Naive thymus-derived CD4-positive, alpha-beta T cell (primary cell): ENCODE measurements at regions of chr3 and their contacts with region 1.

Region 1: GRCh38 chr3:101544161-101544850 is 17.4 kb upstream of the TRMT10C start:
- DNase-seq: peak in 1 of 9 donors; percentile 10
- ATAC-seq: no peak
- H3K4me3 ChIP-seq: no peak overlapping the region
- H3K4me3 Mint-ChIP-seq: peak overlapping the region in 9 of 10 donors; percentile 1 to 77 (median 36)
- H3K27ac ChIP-seq: peak overlapping the region; percentile 20
- H3K27ac Mint-ChIP-seq: peak overlapping the region; percentile 51 to 95 (median 89)
- H3K4me1 ChIP-seq: peaks cover 20 to 25% of the 10 kb centered on the region in 2 donors
- H3K4me1 Mint-ChIP-seq: peaks cover 17 to 40% (median 31%) of the 10 kb centered on the region in 7 donors
- H3K27me3 ChIP-seq: no peaks in the 10 kb centered on the region
- H3K27me3 Mint-ChIP-seq: no peaks in the 10 kb centered on the region

Region 2: DNA sequence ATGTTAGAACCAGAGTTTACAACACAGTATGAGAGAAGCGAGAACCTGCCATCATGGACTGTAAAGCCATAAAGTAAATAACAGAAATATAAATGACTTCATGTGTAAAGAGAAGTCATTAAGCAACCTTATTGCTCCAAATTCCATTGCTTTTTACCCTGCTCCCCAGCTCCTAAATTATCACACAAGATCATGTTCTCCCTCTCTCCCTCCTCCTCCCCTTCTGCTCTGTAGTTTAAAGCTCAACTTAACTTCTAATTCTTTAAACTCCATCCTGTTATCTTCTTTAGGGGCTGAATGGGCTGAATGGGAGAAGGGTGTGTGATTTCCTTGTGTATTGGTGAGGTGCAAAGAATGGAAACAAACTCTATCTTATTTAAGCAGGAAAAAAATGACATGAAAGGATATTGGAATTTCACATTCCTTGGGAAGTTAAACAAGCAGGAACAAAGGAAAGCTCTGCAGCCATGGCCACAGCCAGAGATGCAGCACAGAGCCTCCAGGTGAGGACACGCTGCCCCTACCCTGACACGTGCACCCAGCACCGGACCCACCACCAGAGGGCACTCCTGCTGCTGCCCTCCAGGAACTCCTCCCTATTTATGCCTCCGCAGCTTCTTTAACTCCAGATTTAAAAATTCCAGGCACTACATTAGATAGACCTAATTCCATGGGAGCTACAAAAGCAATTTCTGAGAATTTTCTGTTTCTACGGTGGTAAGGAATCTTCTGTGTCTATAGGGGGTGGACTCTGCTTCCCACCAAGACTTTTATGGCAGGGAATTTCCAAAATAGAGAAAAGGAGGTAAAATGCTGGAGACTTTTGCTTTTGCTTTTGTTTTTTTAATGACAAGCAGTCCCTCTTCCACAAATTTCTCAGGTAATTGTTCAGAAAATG is 474.2 kb before region 1 on chr3:
- CTCF ChIA-PET with region 1: no interaction called
- POLR2A ChIA-PET with region 1: no interaction called
- intact Hi-C with region 1: loop called in 1 of 2 experiments (anchors 1 kb)
- DNase-seq: peak; percentile 17 to 60 (median 30)
- ATAC-seq: peak; percentile 66
- H3K4me3 ChIP-seq: no peak overlapping the region
- H3K4me3 Mint-ChIP-seq: no peak overlapping the region
- H3K27ac ChIP-seq: no peak overlapping the region
- H3K27ac Mint-ChIP-seq: peak overlapping the region in 1 of 9 donors; percentile 39
- H3K4me1 ChIP-seq: peaks cover 0 to 4% of the 10 kb centered on the region in 2 donors
- H3K4me1 Mint-ChIP-seq: peaks cover 0 to 4% (median 0%) of the 10 kb centered on the region in 7 donors
- H3K27me3 ChIP-seq: no peaks in the 10 kb centered on the region
- H3K27me3 Mint-ChIP-seq: peaks cover 13 to 25% (median 20%) of the 10 kb centered on the region in 5 donors

Region 3: GRCh38 chr3:101423984-101424888 is 120.1 kb before region 1 on chr3:
- CTCF ChIA-PET with region 1: no interaction called
- POLR2A ChIA-PET with region 1: interaction called, 5 read pairs
- intact Hi-C with region 1: loop called in 1 of 2 experiments (anchors 5 kb)
- DNase-seq: peak in 2 of 9 donors; percentile 4 to 7
- ATAC-seq: peak; percentile 54
- H3K4me3 ChIP-seq: no peak overlapping the region
- H3K4me3 Mint-ChIP-seq: peak overlapping the region in 7 of 10 donors; percentile 45 to 72 (median 63)
- H3K27ac ChIP-seq: no peak overlapping the region
- H3K27ac Mint-ChIP-seq: peak overlapping the region in 6 of 9 donors; percentile 38 to 88 (median 67)
- H3K4me1 ChIP-seq: peaks cover 4 to 21% of the 10 kb centered on the region in 2 donors
- H3K4me1 Mint-ChIP-seq: peaks cover 27 to 75% (median 60%) of the 10 kb centered on the region in 7 donors
- H3K27me3 ChIP-seq: no peaks in the 10 kb centered on the region
- H3K27me3 Mint-ChIP-seq: no peaks in the 10 kb centered on the region

Region 4: DNA sequence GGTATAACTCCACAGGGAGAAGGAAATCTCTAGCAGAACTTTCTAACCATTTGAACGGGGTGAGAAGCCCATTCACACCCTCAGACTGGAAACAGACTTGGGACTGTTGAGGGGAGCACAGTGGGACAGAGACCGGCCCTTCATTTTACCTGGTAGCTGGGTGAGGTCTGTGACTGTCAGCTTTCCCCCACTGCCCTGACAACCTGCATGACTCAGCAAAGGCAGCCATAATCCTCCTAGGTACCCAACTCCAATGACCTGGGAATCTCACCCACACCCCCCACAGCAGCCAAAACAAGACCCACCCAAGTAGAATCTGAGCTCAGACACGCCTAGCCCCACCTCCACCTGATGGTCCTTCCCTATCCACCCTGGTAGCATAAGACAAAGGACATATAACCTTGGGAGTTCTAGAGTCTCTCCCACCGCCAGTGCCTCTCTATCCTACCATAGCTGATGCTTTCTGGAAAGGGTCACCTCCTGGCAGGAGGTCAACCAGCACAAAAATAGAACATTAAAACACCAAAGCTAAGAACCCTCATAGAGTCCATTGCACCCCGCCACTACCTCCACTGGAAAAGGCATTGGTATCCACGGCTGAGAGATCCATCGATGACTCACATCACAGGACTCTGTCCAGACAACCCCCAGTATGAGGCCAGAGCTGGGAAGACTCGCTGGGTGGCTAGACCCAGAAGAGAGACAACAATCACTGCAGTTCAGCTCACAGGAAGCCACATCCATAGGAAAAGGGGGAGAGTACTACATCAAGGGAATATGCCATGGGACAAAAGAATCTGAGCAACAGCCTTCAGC is 59.3 kb before region 1 on chr3:
- CTCF ChIA-PET with region 1: interaction called, 10 read pairs
- POLR2A ChIA-PET with region 1: no interaction called
- intact Hi-C with region 1: no loop called
- DNase-seq: no peak
- ATAC-seq: no peak
- H3K4me3 ChIP-seq: no peak overlapping the region
- H3K4me3 Mint-ChIP-seq: peak overlapping the region in 6 of 10 donors; percentile 4 to 56 (median 26)
- H3K27ac ChIP-seq: no peak overlapping the region
- H3K27ac Mint-ChIP-seq: peak overlapping the region in 8 of 9 donors; percentile 17 to 82 (median 60)
- H3K4me1 ChIP-seq: no peaks in the 10 kb centered on the region
- H3K4me1 Mint-ChIP-seq: peaks cover 29 to 94% (median 74%) of the 10 kb centered on the region in 7 donors
- H3K27me3 ChIP-seq: no peaks in the 10 kb centered on the region
- H3K27me3 Mint-ChIP-seq: no peaks in the 10 kb centered on the region

Region 5: GRCh38 chr3:101518421-101518871 is 25.9 kb before region 1 on chr3:
- CTCF ChIA-PET with region 1: interaction called, 6 read pairs
- POLR2A ChIA-PET with region 1: interaction called, 29 read pairs
- intact Hi-C with region 1: loop called (anchors 1 kb)
- DNase-seq: peak in 8 of 9 donors; percentile 40 to 82 (median 76)
- ATAC-seq: peak; percentile 91
- H3K4me3 ChIP-seq: peak overlapping the region; percentile 17
- H3K4me3 Mint-ChIP-seq: peak overlapping the region; percentile 35 to 82 (median 62)
- H3K27ac ChIP-seq: peak overlapping the region; percentile 77
- H3K27ac Mint-ChIP-seq: peak overlapping the region; percentile 87 to 98 (median 96)
- H3K4me1 ChIP-seq: peaks cover 54 to 62% of the 10 kb centered on the region in 2 donors
- H3K4me1 Mint-ChIP-seq: peaks cover 20 to 80% (median 71%) of the 10 kb centered on the region in 7 donors
- H3K27me3 ChIP-seq: no peaks in the 10 kb centered on the region
- H3K27me3 Mint-ChIP-seq: no peaks in the 10 kb centered on the region